ENCODE measurements at regions of chr6 and their contacts with region 1.

Region 1: DNA sequence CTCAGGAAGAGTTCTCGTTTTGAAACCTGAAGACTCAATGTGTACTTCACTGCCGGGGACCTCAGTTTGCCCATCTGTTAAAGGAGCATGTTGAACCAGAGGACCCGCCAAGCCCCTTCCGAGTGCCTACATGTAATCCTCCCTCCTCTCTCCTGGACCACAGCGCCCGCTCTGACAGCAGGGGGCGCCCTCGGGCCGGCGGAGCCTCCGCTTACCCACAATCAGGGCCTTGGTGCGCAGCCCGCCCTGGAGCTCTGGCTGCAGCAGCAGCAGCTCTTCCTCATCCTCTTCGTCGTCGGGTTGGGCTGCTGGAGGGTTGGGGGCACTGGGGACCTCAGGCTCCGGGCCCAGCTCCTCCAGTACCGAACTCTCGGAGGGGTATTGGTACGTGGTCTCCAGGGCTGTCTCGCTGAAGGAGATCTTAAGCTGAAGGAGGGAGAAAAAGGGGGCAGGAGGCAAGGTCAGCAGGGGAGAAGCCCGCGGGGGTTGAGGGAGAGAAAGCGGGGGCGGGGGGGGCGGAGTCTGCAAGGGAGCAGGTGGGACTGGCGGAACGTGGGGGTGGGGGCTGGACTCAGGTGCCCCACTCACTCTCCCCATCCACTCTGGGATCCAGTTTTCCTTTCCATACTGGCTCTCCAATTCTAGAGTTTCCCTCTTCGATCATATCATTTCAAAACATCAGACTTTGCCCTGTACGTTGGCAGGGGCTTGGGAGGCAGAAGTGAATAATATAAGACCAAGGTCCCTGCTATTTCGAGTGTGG is 6.3 kb upstream of the DHX16 start:
- DNase-seq: peak; percentile 85
- H3K4me3 ChIP-seq: peak overlapping the region in 2 of 3 experiments; percentile 8 to 27
- H3K27ac ChIP-seq: peak overlapping the region; percentile 2
- H3K4me1 ChIP-seq: peaks cover 31% of the 10 kb centered on the region
- H3K27me3 ChIP-seq: no peaks in the 10 kb centered on the region
- CTCF ChIP-seq: peak; percentile 95 to 96
- POLR2A ChIP-seq: no peak

Region 2: DNA sequence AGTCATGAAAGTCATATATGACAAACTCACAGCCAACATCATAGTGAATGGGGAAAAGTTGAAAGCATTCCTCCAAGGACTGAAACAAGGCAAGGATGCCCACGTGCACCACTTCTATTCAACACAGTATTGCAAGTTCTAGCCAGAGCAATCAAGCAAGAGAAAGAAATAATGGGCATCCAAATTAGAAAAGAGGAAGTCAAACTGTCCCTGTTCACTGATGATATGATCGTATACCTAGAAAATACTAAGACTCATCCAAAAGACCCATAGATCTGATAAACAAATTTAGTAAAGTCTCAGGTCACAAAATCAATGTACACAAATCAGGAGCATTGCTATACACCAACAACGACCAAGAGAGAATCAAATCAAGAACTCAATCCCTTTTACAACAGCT is 293.0 kb before region 1 on chr6:
- CTCF ChIA-PET with region 1: no interaction called
- POLR2A ChIA-PET with region 1: no interaction called
- dilution Hi-C with region 1: no loop called
- intact Hi-C with region 1: no loop called
- DNase-seq: no peak
- H3K4me3 ChIP-seq: no peak overlapping the region
- H3K27ac ChIP-seq: no peak overlapping the region
- H3K4me1 ChIP-seq: no peaks in the 10 kb centered on the region
- H3K27me3 ChIP-seq: peaks cover 12 to 19% of the 10 kb centered on the region in 2 experiments
- CTCF ChIP-seq: no peak
- POLR2A ChIP-seq: no peak

Region 3: DNA sequence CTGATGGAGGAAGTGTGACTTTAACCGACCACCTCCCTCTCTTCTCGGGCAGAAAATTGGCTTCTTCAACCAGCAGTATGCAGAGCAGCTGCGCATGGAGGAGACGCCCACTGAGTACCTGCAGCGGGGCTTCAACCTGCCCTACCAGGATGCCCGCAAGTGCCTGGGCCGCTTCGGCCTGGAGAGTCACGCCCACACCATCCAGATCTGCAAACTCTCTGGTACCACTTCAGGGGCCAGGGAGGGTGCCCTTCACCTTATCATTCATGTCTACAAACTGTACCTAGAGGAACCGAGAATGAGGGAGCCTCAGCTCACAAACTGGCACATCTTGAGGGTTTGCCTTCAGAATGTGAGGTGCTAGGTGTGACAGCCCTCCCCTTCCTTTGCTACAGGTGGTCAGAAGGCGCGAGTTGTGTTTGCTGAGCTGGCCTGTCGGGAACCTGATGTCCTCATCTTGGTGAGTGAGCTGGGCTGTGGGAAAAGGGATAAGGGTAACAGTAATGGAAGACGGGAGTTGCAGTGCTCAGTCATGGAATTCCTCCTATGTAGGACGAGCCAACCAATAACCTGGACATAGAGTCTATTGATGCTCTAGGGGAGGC is 89.3 kb before region 1 on chr6:
- CTCF ChIA-PET with region 1: no interaction called
- POLR2A ChIA-PET with region 1: no interaction called
- dilution Hi-C with region 1: no loop called
- intact Hi-C with region 1: no loop called
- DNase-seq: no peak
- H3K4me3 ChIP-seq: no peak overlapping the region
- H3K27ac ChIP-seq: no peak overlapping the region
- H3K4me1 ChIP-seq: peaks cover 2% of the 10 kb centered on the region
- H3K27me3 ChIP-seq: no peaks in the 10 kb centered on the region
- CTCF ChIP-seq: no peak
- POLR2A ChIP-seq: no peak

Region 4: DNA sequence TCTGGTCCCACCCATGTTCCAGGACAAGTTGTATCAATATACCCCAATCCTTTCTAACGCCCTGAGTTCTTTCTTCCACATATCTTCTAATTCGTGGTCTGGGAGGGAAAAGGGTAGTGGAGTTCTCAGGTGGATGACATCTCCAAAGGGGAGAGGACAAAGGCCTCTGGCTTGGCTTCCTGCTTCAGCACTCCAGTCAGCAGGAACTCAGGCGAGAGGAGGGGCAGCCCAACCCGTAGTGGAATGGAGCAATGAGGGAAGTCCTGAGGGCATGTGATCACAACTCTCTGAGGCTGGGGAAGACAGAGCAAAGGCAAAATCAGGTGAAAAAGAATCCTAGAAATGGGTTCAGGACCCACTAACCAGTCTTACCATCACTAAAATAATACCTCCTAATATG is 21.2 kb after region 1 on chr6:
- CTCF ChIA-PET with region 1: interaction called, 17 read pairs
- POLR2A ChIA-PET with region 1: no interaction called
- dilution Hi-C with region 1: no loop called
- intact Hi-C with region 1: no loop called
- DNase-seq: no peak
- H3K4me3 ChIP-seq: no peak overlapping the region
- H3K27ac ChIP-seq: no peak overlapping the region
- H3K4me1 ChIP-seq: no peaks in the 10 kb centered on the region
- H3K27me3 ChIP-seq: no peaks in the 10 kb centered on the region
- CTCF ChIP-seq: no peak
- POLR2A ChIP-seq: no peak

Region 5: DNA sequence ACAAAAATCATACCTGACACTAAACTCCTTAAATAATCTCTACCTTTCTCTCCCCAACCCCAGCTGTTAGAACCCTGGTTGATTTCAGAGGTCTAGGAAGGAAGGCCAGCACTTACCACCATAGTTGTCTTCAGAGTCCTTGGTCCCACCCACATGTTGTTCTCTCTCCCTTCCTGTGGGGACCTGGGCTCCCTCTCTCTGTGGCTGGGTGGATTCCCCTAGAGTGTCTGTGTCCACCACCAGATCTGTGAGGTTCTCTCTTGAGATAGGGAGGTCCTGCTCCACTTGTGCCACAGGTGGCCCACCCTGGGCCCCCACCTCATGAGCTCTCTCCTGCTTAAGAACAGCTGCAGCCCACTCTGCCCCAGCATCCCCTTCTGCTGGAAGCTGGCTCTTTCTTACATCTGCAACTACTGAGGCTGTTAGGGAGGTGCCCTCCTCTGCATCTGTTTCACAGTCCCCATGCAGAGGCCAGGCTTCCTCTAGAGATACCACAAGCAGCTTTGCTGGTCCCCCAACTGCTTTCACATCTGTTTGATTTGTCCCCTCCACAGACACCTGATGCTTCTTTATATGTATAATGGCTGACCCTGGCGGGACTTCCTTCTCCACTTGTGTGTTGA is 32.7 kb after region 1 on chr6:
- CTCF ChIA-PET with region 1: interaction called, 29 read pairs
- POLR2A ChIA-PET with region 1: interaction called, 18 read pairs
- dilution Hi-C with region 1: no loop called
- intact Hi-C with region 1: loop called (anchors 1 kb)
- DNase-seq: no peak
- H3K4me3 ChIP-seq: no peak overlapping the region
- H3K27ac ChIP-seq: no peak overlapping the region
- H3K4me1 ChIP-seq: peaks cover 7% of the 10 kb centered on the region
- H3K27me3 ChIP-seq: no peaks in the 10 kb centered on the region
- CTCF ChIP-seq: no peak
- POLR2A ChIP-seq: no peak

Region 6: DNA sequence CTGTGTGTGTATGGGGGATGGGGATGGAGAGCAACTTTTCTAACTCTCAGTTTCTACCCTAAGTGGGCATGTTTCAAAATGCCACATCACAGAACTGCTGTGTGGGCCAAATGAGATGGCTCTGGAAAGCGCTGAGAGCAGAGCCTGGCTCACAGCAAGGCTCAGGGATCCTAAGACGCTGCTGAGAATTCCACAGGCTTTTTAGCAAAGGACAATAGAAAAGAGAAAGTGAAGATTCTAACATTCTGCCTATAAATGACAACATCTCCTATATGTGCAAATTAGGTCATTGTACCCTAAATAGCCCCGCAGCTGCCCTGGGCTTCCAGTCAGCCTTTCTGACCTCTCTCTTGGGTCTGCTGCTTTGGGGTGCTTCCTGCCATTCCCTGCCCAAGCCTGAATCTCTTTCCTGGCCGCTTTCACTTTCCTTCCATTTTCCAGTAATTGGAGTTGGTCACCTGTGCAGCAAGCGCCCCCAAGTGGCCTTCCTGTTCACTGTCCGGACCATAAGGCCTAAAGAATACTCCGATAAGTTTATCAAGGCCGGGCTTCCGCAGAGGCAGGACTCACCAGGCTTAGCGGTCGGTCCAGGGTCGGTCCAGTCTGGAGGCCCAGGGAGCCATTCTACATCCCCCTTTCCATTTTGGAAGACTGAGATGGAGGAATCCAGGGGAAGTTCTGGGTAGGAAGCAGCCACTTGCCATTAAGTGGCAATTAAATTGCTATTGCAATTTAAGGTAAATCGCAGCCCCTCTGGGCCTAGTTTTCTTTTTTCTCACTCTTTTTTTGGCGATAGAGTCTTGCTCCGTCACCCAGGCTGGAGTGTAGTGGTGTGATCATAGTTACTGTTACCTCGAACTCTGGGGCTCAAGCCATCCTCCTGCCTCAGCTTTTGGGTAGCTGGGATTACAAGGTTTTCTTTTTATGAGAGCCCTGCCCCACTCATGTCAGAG is 198.6 kb after region 1 on chr6:
- CTCF ChIA-PET with region 1: interaction called, 6 read pairs
- POLR2A ChIA-PET with region 1: no interaction called
- dilution Hi-C with region 1: no loop called
- intact Hi-C with region 1: loop called (anchors 2 kb)
- DNase-seq: peak; percentile 92
- H3K4me3 ChIP-seq: peak overlapping the region in 2 of 3 experiments; percentile 9 to 31
- H3K27ac ChIP-seq: peak overlapping the region; percentile 81
- H3K4me1 ChIP-seq: peaks cover 23% of the 10 kb centered on the region
- H3K27me3 ChIP-seq: peaks cover 0 to 2% of the 10 kb centered on the region in 2 experiments
- CTCF ChIP-seq: peak; percentile 83 to 90
- POLR2A ChIP-seq: peak; percentile 49